ENCODE measurements at regions of chr1 and their contacts with region 1.

Region 1: DNA sequence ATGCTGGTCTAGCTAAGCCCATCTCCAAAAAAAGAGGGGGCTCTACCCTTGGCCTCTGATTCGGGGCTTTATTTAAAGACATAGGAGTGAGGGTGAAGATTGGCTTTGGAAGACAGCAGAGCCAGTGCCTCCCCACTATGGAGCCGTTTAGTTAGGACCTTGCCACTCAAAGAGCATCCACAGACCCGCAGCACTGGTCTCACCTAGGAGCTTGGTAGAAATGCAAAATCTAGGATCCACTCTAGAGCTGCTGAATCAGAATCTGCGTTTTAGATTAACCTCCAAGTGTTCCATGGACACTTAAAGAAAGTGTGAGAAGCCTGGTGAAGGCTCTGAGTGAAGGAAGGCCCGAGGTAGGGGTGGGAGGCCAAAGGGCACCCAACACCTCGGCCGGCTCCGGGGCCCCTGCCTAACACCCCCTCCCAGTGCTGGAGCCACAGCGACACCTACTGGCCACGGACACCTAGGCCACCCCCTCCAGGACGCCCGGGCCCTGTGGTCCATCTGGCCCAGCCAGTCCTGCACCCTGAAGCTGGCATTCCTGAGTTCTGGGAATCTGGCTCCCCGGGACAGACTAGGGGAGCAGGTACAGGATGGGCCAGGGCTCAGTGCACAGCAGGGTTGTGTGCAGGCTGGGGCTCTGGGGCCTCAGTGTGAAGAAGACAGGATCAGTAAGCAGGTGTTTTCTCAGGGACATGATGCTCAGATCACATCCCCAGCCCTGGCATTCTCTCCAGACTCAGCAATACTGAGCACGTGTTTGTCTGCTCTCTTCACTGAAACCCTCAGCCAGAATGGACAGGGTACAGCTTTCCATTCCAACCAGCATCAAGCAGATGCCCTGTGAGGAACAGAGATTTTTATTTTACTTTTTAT is 79.2 kb downstream of the TMEM53 start:
- DNase-seq: peak; percentile 92
- H3K4me3 ChIP-seq: no peak overlapping the region
- H3K27ac ChIP-seq: no peak overlapping the region
- H3K4me1 ChIP-seq: no peaks in the 10 kb centered on the region
- H3K27me3 ChIP-seq: no peaks in the 10 kb centered on the region; the same call in 1 of the 2 replicates
- CTCF ChIP-seq: peak; percentile 95
- EP300 ChIP-seq: no peak
- RAD21 ChIP-seq: peak; percentile 81

Region 2: GRCh38 chr1:43969746-43970466 is 625.2 kb before region 1 on chr1 and contains the start of gene DPH2:
- CTCF ChIA-PET with region 1: no interaction called
- POLR2A ChIA-PET with region 1: no interaction called
- DNase-seq: peak; percentile 96
- H3K4me3 ChIP-seq: peak within 1 kb of the TSS; percentile 98 to 100
- H3K27ac ChIP-seq: peak within 1 kb of the TSS; percentile 32 to 65; a peak in 3 of 4 replicates
- H3K4me1 ChIP-seq: peaks cover 3 to 23% of the 10 kb centered on the region in 2 experiments; a peak in 1 of 4 replicates
- H3K27me3 ChIP-seq: no peaks in the 10 kb centered on the region
- CTCF ChIP-seq: peak; percentile 26
- EP300 ChIP-seq: no peak
- RAD21 ChIP-seq: no peak
- polyA plus RNA-seq, gene DPH2: 76.9 and 97.5 TPM in 2 replicates

Region 3: GRCh38 chr1:44318097-44319088 is 276.7 kb before region 1 on chr1:
- CTCF ChIA-PET with region 1: interaction called, 11 read pairs
- POLR2A ChIA-PET with region 1: no interaction called
- DNase-seq: peak; percentile 72
- H3K4me3 ChIP-seq: no peak overlapping the region
- H3K27ac ChIP-seq: no peak overlapping the region; a peak in 1 of 4 replicates
- H3K4me1 ChIP-seq: no peaks in the 10 kb centered on the region; a peak in 1 of 4 replicates
- H3K27me3 ChIP-seq: no peaks in the 10 kb centered on the region
- CTCF ChIP-seq: peak; percentile 94
- EP300 ChIP-seq: no peak
- RAD21 ChIP-seq: peak; percentile 55

Region 4: DNA sequence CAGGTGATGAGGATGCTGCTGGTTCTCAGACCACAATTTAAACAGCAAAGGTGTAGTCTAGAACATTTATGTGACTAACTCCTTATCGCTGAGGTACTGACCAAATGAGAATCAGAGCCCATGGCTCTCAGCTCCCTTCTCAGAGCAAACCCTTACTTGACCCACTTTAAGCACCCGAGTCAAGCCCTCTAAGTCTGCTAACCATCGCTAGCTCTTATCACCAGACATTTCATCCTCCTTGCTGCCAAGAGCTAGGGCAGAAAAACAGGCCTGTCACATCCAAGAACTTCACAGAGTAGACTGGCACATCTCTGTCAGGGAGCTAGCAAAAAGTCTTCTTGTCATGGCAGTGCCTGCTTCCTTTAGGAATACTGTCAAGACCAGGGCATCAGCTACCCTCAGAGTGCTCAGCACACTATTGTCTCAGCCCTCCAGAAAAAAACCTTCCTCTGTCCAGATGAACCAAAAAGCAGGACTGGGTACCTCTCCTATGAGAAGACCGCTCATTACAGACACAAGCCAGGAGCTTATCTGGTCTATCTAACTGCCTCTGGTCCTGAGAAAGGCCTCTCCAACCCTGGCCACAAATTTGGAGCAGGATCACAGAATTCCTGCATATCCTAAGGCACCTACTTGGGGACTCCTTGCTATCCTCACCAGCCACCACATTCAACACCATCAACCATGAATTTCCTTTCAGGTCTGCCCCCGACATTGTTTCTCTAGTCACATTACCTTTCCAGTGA is 266.3 kb before region 1 on chr1:
- CTCF ChIA-PET with region 1: no interaction called
- POLR2A ChIA-PET with region 1: no interaction called
- DNase-seq: no peak
- H3K4me3 ChIP-seq: no peak overlapping the region
- H3K27ac ChIP-seq: peak overlapping the region; percentile 56 to 96
- H3K4me1 ChIP-seq: peaks cover 31 to 33% of the 10 kb centered on the region in 2 experiments
- H3K27me3 ChIP-seq: no peaks in the 10 kb centered on the region
- CTCF ChIP-seq: no peak
- EP300 ChIP-seq: no peak
- RAD21 ChIP-seq: no peak

Region 5: DNA sequence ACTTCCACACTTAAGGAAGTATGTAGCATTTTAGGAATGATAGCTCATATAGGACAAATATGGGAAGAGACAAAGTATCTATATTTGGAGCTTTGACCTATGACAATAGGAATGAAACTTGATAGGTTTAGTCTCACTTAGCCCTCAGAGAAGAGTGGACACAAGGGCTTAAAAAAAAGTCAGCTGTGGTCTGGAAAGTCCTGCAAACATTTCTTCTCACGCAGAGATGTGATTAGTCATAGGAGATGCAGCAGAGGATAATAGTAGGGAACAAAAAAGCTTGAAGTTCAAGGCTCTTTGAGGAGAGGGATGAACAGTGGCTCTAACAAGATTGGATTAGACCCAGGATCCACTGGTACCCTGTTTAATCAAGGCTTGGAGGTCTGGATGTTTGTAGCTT is 204.8 kb before region 1 on chr1:
- CTCF ChIA-PET with region 1: interaction called, 11 read pairs
- POLR2A ChIA-PET with region 1: no interaction called
- DNase-seq: no peak
- H3K4me3 ChIP-seq: no peak overlapping the region
- H3K27ac ChIP-seq: peak overlapping the region in 1 of 2 experiments; percentile 40; a peak in 2 of 4 replicates
- H3K4me1 ChIP-seq: peaks cover 0 to 5% of the 10 kb centered on the region in 2 experiments; a peak in 1 of 4 replicates
- H3K27me3 ChIP-seq: peaks cover 48% of the 10 kb centered on the region
- CTCF ChIP-seq: no peak
- EP300 ChIP-seq: no peak
- RAD21 ChIP-seq: no peak

Region 6: GRCh38 chr1:44581205-44581604 is 13.9 kb before region 1 on chr1:
- CTCF ChIA-PET with region 1: interaction called, 29 read pairs
- POLR2A ChIA-PET with region 1: no interaction called
- DNase-seq: no peak
- H3K4me3 ChIP-seq: no peak overlapping the region
- H3K27ac ChIP-seq: no peak overlapping the region
- H3K4me1 ChIP-seq: no peaks in the 10 kb centered on the region
- H3K27me3 ChIP-seq: peaks cover 13% of the 10 kb centered on the region
- CTCF ChIP-seq: no peak
- EP300 ChIP-seq: no peak
- RAD21 ChIP-seq: no peak

Region 7: GRCh38 chr1:44616991-44617702 is 22.0 kb after region 1 on chr1:
- CTCF ChIA-PET with region 1: interaction called, 22 read pairs
- POLR2A ChIA-PET with region 1: no interaction called
- DNase-seq: peak; percentile 71
- H3K4me3 ChIP-seq: peak overlapping the region; percentile 50 to 62
- H3K27ac ChIP-seq: peak overlapping the region in 1 of 2 experiments; percentile 76; a peak in 2 of 4 replicates
- H3K4me1 ChIP-seq: peaks cover 12 to 15% of the 10 kb centered on the region in 2 experiments; a peak in 3 of 4 replicates
- H3K27me3 ChIP-seq: no peaks in the 10 kb centered on the region
- CTCF ChIP-seq: no peak
- EP300 ChIP-seq: no peak
- RAD21 ChIP-seq: no peak

Region 8: DNA sequence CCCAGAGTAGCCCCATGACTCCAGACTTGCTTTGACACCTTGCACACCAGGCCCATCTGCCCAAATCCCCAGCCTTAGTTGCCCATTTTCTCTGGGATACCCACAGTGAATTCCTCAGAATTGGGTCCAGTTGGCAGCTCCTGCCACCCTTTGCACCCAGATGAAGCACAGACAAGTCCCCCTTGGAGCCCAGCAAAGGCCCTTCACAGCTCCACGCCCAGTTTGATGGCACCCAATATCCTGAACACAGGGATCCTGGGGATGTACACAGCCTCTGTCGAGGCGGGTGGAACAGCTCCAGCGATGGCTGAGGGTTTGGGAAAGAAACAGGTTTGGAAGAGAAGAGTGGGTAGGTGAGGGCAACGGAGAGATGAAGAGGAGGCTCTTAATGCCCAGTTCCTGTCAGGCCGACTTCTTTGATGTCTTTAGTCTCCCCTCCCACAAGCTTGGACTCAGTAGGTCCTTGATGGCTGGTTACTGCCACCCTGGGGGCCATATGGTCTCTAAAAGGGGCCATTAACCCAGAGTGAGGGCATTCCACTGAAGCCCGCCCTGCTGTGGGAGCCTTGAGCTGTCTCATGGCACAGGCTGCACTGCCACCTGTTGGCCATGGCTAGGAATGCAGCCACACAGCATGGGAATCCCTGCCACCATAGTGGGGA is 57.5 kb after region 1 on chr1:
- CTCF ChIA-PET with region 1: interaction called, 41 read pairs
- POLR2A ChIA-PET with region 1: no interaction called
- DNase-seq: peak; percentile 88
- H3K4me3 ChIP-seq: peak overlapping the region in 1 of 2 experiments; percentile 35; a peak in 1 of 4 replicates
- H3K27ac ChIP-seq: no peak overlapping the region
- H3K4me1 ChIP-seq: peaks cover 0 to 31% of the 10 kb centered on the region in 2 experiments; a peak in 1 of 4 replicates
- H3K27me3 ChIP-seq: no peaks in the 10 kb centered on the region
- CTCF ChIP-seq: peak; percentile 93
- EP300 ChIP-seq: no peak
- RAD21 ChIP-seq: peak; percentile 98